Gastrocnemius medialis (tissue), 4 donors: ENCODE measurements at regions of chr19 and their contacts with region 1.

Region 1: DNA sequence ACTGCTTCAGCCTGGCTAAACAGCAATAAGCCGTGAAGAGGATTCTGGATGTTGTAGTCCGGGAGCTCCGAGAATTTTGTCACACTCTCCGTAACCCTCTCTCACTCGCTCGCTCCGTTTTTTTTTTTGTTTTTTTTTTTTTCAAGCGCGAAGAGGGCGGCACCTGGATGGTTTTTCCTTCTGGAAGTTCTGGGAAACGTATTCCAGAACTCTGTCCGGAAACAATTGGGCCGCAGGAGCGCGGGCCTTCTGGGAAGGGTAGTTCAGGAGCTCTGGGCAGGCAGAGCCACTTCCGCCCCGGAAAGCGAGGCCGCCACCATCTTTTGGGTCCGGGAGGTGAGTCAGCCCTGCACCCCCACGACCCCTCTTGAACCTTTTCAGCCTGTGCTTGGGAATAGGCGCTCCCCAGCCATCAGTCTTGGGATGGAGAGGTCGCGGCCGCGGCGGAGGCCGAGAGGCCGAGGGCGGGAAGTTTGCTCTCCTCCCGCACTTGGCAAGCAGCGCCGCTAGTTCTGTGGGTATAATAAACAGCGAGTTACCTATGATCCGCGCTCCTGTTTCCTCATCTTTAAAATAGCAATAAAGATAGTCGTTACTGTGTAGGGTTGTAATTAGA is at the start of gene ZNF227:
- DNase-seq: peak; percentile 85 to 92
- ATAC-seq: peak; percentile 97 to 98
- H3K4me3 ChIP-seq: peak within 1 kb of the TSS; percentile 70 to 98 (median 81)
- H3K27ac ChIP-seq: peak within 1 kb of the TSS; percentile 87 to 91 (median 90)
- H3K4me1 ChIP-seq: peaks cover 13 to 18% of the 10 kb centered on the region in 2 donors
- H3K27me3 ChIP-seq: no peaks in the 10 kb centered on the region
- CTCF ChIP-seq: no peak
- POLR2A ChIP-seq: peak; percentile 32 to 53
- total RNA-seq, gene ZNF227: 6.8 to 17.7 (median 8.3) TPM

Region 2: DNA sequence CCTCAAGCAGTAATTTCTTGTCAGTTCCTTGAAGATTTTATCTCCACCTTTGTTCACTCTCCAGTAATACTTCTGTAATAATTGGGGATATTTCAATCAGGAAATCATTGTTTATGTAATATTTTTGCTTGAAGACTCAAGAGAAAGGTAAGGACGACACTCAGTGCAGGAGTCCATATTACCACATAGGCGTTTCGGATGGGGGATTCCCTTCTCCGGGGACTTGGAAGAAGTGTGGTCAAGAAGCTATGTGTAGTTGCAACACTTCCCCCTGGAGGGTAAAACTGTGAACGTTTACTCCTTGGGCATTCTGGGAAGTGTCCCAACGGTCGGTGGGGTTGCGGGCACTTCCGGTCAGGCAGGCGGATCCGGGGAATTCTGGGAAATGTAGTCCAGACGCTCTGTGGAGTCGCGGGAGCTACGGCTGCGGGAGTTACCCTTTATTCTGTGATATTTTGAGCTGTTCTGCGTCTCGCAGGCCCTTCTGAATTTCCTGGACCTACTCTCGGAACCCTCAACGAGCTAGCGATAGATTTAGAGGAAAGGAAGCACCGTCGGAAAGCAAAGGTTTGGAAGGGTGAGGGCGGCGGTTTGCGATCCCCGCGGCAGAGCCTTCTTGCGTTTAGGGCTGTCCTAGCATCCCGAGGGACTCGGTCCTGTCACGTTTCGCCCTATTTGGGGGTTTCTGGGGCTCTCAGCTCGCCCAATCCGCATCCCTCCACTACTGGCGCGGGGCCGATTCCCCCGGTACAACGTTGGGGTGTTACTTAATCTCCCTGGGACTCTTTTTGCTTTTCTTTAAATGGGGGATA is 261.3 kb before region 1 on chr19 and contains the start of gene ZNF221:
- in situ Hi-C with region 1: no loop called
- intact Hi-C with region 1: loop called (anchors 1 kb)
- DNase-seq: peak; percentile 87 to 90
- ATAC-seq: peak; percentile 100
- H3K4me3 ChIP-seq: peak within 1 kb of the TSS; percentile 70 to 97 (median 84)
- H3K27ac ChIP-seq: peak within 1 kb of the TSS; percentile 66 to 80 (median 74)
- H3K4me1 ChIP-seq: peaks cover 0 to 3% of the 10 kb centered on the region in 2 donors
- H3K27me3 ChIP-seq: no peaks in the 10 kb centered on the region
- CTCF ChIP-seq: peak in 4 of 5 experiments; percentile 19 to 48 (median 38)
- POLR2A ChIP-seq: no peak
- total RNA-seq, gene ZNF221: 0.76 to 15.3 (median 0.96) TPM

Region 3: GRCh38 chr19:44071824-44072542 is 140.4 kb before region 1 on chr19 and contains the start of gene ZNF284:
- in situ Hi-C with region 1: no loop called
- intact Hi-C with region 1: loop called (anchors 5 kb)
- DNase-seq: peak; percentile 82 to 87
- ATAC-seq: peak; percentile 100
- H3K4me3 ChIP-seq: peak within 1 kb of the TSS; percentile 60 to 83 (median 77)
- H3K27ac ChIP-seq: peak within 1 kb of the TSS; percentile 56 to 79 (median 59)
- H3K4me1 ChIP-seq: peaks cover 10 to 13% of the 10 kb centered on the region in 2 donors
- H3K27me3 ChIP-seq: no peaks in the 10 kb centered on the region
- CTCF ChIP-seq: no peak
- POLR2A ChIP-seq: peak in 1 of 2 donors; percentile 20
- total RNA-seq, gene ZNF284: 0.38 to 1.3 (median 0.63) TPM

Region 4: GRCh38 chr19:44113138-44113783 is 99.1 kb before region 1 on chr19 and contains the start of gene ZNF225:
- in situ Hi-C with region 1: loop called in 2 of 4 experiments (anchors 5 to 10 kb)
- intact Hi-C with region 1: loop called (anchors 2 kb)
- DNase-seq: peak; percentile 97 to 98
- ATAC-seq: peak; percentile 100
- H3K4me3 ChIP-seq: peak within 1 kb of the TSS; percentile 67 to 92 (median 86)
- H3K27ac ChIP-seq: peak within 1 kb of the TSS; percentile 73 to 86 (median 84)
- H3K4me1 ChIP-seq: peaks cover 14 to 18% of the 10 kb centered on the region in 2 donors
- H3K27me3 ChIP-seq: no peaks in the 10 kb centered on the region
- CTCF ChIP-seq: peak in 1 of 5 experiments; percentile 21
- POLR2A ChIP-seq: peak in 1 of 2 donors; percentile 17
- total RNA-seq, gene ZNF225: 0.75 to 1.4 (median 1.1) TPM

Region 5: GRCh38 chr19:44164673-44165512 is 47.5 kb before region 1 on chr19 and contains the start of gene ZNF226:
- in situ Hi-C with region 1: loop called in 1 of 4 experiments (anchors 10 kb)
- intact Hi-C with region 1: loop called (anchors 1 kb)
- DNase-seq: peak; percentile 94
- ATAC-seq: peak; percentile 100
- H3K4me3 ChIP-seq: peak within 1 kb of the TSS; percentile 86 to 95 (median 88)
- H3K27ac ChIP-seq: peak within 1 kb of the TSS; percentile 79 to 86 (median 84)
- H3K4me1 ChIP-seq: peaks cover 7 to 13% of the 10 kb centered on the region in 2 donors
- H3K27me3 ChIP-seq: no peaks in the 10 kb centered on the region
- CTCF ChIP-seq: no peak
- POLR2A ChIP-seq: peak in 1 of 2 donors; percentile 53
- total RNA-seq, gene ZNF226: 3.2 to 6.9 (median 3.8) TPM

Region 6: DNA sequence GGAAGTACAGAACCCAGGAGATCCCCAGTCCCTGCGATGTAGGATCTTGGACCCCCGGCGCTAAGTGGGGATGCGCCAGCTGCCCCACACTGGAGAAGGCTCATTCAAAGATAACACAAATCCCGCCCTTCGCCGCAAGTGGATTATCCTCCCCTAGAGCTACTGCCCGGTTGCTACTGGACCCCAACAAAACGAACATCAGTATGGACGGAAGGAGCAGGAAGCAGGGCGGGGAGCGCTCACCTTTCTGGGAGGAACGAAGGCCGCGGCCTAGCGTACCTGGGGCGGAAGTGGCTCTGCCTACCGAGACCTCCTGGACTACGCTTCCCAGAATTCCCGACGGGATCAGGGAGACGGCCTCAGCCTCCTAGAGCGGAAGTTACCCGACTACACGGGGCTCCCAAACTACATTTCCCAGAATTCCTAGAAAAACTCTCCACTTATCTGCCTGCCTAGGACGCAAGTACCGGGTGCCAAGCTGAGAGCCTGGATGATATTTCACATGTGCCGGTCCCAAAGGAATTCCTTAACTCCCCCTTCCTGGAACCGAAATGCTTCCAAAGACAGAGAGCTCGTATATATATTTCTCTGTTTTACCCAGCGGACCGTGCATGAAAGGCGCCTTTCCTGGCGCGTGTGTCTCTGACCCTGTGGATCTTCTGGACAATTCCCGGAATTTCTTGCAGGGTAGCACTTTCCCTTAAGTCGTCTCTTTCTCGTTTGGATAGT is 144.2 kb after region 1 on chr19 and contains the start of gene ZNF112:
- in situ Hi-C with region 1: no loop called
- intact Hi-C with region 1: loop called (anchors 1 kb)
- DNase-seq: peak; percentile 85 to 88
- ATAC-seq: peak; percentile 100
- H3K4me3 ChIP-seq: peak within 1 kb of the TSS; percentile 51 to 74 (median 65)
- H3K27ac ChIP-seq: peak within 1 kb of the TSS; percentile 46 to 68 (median 58)
- H3K4me1 ChIP-seq: peaks cover 8 to 9% of the 10 kb centered on the region in 2 donors
- H3K27me3 ChIP-seq: no peaks in the 10 kb centered on the region
- CTCF ChIP-seq: no peak
- POLR2A ChIP-seq: no peak
- total RNA-seq, gene ZNF112: 0.78 to 4.0 (median 1.6) TPM